T-cell (primary cell): ENCODE measurements at regions of chr17 and their contacts with region 1.

Region 1: GRCh38 chr17:8156246-8156992 is 4.2 kb upstream of the PER1 start:
- DNase-seq: peak; percentile 99 to 100 (median 100)
- ATAC-seq: peak; percentile 75 to 86 (median 85)
- H3K4me3 ChIP-seq: peak overlapping the region; percentile 91 to 96
- H3K4me3 Mint-ChIP-seq: no peak overlapping the region
- H3K27ac ChIP-seq: peak overlapping the region; percentile 100
- H3K27ac Mint-ChIP-seq: no peak overlapping the region
- H3K4me1 ChIP-seq: peaks cover 34 to 93% of the 10 kb centered on the region in 2 experiments
- H3K4me1 Mint-ChIP-seq: peaks cover 39 to 70% (median 54%) of the 10 kb centered on the region in 3 donors
- H3K27me3 ChIP-seq: no peaks in the 10 kb centered on the region
- H3K27me3 Mint-ChIP-seq: no peaks in the 10 kb centered on the region

Region 2: DNA sequence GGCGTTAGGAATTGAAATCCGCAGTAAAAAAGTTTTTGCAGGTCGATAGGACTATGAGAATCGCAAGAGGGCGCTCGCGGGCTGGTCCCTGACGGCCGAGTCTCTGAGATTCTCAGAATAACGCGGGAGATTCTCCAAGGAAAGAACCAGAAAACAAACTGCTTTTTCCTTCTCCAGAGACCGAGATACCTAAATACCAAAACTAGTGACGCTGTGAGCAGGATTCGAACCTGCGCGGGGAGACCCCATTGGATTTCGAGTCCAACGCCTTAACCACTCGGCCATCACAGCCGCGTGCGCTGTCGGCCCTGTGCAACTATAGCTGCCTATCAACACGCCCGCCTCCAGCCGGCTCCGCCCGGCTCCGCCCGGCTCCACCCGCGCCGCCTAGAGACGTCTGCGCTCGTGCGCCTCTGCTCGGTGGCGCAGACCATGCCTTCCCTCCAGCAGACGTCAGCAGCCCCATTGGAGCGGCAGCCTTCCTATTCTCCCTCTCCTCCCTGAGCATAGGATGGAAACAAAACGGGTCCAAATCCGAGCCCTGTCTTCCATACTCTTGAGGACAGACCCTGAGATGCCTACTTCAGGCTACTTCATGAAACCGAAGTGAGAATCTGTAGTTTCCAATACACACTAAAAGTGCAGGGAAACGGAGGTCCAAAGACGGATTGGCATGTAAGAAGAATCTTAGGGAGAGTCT is 17.6 kb before region 1 on chr17:
- CTCF ChIA-PET with region 1: interaction called, 4 to 10 read pairs
- POLR2A ChIA-PET with region 1: interaction called, 8 to 19 read pairs
- DNase-seq: peak; percentile 89 to 98 (median 94)
- ATAC-seq: peak; percentile 80 to 97 (median 94)
- H3K4me3 ChIP-seq: peak overlapping the region; percentile 68 to 74
- H3K4me3 Mint-ChIP-seq: no peak overlapping the region
- H3K27ac ChIP-seq: peak overlapping the region; percentile 97
- H3K27ac Mint-ChIP-seq: no peak overlapping the region
- H3K4me1 ChIP-seq: peaks cover 10 to 28% of the 10 kb centered on the region in 2 experiments
- H3K4me1 Mint-ChIP-seq: peaks cover 0 to 12% (median 2%) of the 10 kb centered on the region in 3 donors
- H3K27me3 ChIP-seq: peaks cover 0 to 3% of the 10 kb centered on the region in 2 experiments
- H3K27me3 Mint-ChIP-seq: no peaks in the 10 kb centered on the region

Region 3: DNA sequence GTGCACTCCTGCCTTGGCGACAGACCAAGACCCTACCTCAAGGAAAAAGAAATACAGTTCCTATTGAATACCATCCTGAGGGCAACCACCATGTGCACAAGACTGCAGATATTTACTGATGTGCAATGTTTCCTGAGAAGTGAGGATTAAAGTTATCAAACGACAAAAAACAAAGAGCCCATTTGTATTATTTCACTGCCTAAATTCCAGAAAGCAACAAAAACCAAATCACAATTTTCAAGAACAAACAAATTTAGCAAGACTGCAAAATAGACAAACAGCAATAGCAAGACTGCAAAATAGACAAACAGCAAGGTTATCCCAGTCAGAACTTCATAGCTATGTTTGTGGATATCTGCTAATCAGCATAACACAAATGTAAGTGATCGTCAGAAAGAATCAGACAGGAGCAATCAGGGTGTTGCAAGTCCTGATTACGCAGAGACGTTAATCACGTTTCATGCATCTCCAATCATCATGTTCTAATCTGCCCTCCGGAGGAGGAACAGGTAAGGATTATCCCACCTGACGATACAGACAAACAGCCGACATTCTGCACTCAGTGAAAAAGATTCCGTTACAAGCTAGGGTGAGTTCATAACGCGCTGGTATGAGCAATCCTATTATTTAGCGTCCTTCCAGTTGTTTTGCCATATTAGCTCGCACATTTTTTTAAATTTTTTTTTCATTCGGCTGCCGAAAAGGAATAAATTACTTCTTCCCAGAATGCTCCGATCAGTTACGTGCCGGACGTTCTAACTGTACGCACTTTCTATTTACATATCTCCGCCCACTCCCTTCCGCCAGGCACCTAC is 16.8 kb after region 1 on chr17:
- CTCF ChIA-PET with region 1: interaction called in 1 of 2 experiments, 10 read pairs
- POLR2A ChIA-PET with region 1: interaction called, 5 to 20 read pairs
- DNase-seq: peak in 33 of 35 experiments; percentile 55 to 94 (median 77)
- ATAC-seq: peak; percentile 82 to 85 (median 82)
- H3K4me3 ChIP-seq: peak overlapping the region; percentile 54 to 57
- H3K4me3 Mint-ChIP-seq: peak overlapping the region; percentile 76 to 86 (median 81)
- H3K27ac ChIP-seq: peak overlapping the region; percentile 99
- H3K27ac Mint-ChIP-seq: peak overlapping the region; percentile 100
- H3K4me1 ChIP-seq: peaks cover 22 to 49% of the 10 kb centered on the region in 2 experiments
- H3K4me1 Mint-ChIP-seq: peaks cover 46 to 56% (median 55%) of the 10 kb centered on the region in 3 donors
- H3K27me3 ChIP-seq: no peaks in the 10 kb centered on the region
- H3K27me3 Mint-ChIP-seq: no peaks in the 10 kb centered on the region